ENCODE measurements at regions of chr9 and their contacts with region 1.

Region 1: GRCh38 chr9:98056269-98057137 is at the start of gene NANS:
- DNase-seq: peak; percentile 94
- H3K4me3 ChIP-seq: peak within 1 kb of the TSS; percentile 87
- H3K27ac ChIP-seq: peak within 1 kb of the TSS; percentile 42
- H3K4me1 ChIP-seq: peaks cover 11% of the 10 kb centered on the region
- CTCF ChIP-seq: no peak
- total RNA-seq, gene NANS: 63.7 and 70.6 TPM in 2 replicates

Region 2: DNA sequence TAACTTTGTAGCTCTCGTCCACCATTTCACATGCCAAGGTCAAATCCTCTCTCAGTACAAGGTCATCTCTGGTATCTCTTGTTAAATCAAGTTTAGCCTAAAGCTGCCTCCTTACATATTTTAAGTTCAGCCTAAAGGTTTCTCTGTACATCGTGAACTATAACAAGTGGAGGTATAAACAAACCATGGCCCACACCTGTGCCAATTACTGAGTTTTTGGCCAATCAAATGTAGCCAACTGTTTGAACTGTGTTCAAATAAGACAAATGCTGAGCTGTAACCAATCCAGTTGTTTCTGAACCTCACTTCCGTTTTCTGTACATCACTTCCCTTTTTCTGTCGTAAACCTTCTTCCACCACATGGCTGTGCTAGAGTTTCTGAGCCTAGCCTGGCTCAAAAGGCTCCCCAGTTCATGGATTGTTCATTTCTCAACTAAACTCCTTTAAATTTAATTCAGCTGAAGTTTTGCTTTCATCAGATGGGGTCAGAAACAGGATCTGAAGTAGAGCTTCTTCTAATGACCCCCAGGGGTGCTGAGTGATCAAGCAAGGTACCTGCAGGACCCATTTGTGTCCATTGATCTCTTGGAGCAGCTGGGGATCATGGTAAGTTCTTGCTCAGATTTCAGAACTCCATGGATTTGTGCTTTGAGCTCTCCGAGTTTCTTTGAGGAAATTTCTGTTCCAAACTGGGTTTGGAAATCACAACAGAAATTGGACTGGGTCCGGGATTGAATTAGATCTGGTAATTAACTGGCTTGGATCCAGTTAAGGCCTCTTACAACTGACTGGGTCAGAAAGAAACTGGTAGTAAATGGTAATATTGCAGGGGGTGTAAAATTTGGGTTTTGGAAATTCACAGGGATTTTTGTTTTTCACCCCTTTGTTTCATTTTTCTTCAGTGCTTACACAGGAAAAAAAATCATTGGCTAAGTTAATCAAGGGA is 11.0 kb before region 1 on chr9:
- CTCF ChIA-PET with region 1: interaction called, 5 read pairs
- POLR2A ChIA-PET with region 1: interaction called, 41 read pairs
- intact Hi-C with region 1: no loop called
- DNase-seq: peak; percentile 92
- H3K4me3 ChIP-seq: peak overlapping the region; percentile 72
- H3K27ac ChIP-seq: peak overlapping the region; percentile 75
- H3K4me1 ChIP-seq: peaks cover 55% of the 10 kb centered on the region
- CTCF ChIP-seq: peak; percentile 58

Region 3: GRCh38 chr9:98255578-98256296 is 199.2 kb after region 1 on chr9 and contains the start of gene TBC1D2:
- CTCF ChIA-PET with region 1: interaction called, 3 read pairs
- POLR2A ChIA-PET with region 1: interaction called, 10 read pairs
- intact Hi-C with region 1: loop called (anchors 5 kb)
- DNase-seq: peak; percentile 95
- H3K4me3 ChIP-seq: peak within 1 kb of the TSS; percentile 75
- H3K27ac ChIP-seq: peak within 1 kb of the TSS; percentile 85
- H3K4me1 ChIP-seq: peaks cover 17% of the 10 kb centered on the region
- CTCF ChIP-seq: peak; percentile 51; the same call in 1 of the 2 replicates
- total RNA-seq, gene TBC1D2: 2.5 and 5.5 TPM in 2 replicates